Common myeloid progenitor, CD34-positive (primary cell): ENCODE measurements at regions of chr6 and their contacts with region 1.

Region 1: GRCh38 chr6:44172731-44173500 is 14.3 kb downstream of the CAPN11 start:
- DNase-seq: peak; percentile 74 to 86 (median 83)
- H3K4me3 ChIP-seq: no peak overlapping the region
- H3K27ac ChIP-seq: no peak overlapping the region
- H3K4me1 ChIP-seq: peaks cover 0 to 25% (median 23%) of the 10 kb centered on the region in 4 experiments
- H3K27me3 ChIP-seq: no peaks in the 10 kb centered on the region

Region 2: DNA sequence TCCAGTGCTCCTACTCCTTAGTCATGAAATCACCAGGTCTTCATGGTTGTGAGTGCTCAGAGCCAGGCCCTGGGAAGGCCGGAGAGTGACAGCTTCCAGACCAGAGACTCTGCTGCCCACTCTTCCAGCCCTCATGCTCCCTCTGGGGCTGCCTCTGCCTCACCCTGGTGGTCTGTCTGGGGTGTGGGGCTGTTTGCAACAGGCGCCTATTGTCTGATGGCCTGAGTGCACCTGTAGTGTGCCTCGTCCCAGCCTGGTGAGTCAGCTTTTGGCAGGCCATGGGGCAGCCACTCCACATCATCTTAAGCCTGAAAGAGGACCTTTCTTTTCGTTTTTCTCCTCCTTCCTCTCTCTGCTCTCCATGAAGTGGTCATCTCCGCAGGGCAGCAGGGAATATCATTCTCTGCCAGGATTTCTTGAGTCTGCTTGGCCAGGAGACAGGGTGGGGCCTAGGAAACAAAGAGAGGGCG is 229.1 kb before region 1 on chr6:
- CTCF ChIA-PET with region 1: no interaction called
- POLR2A ChIA-PET with region 1: no interaction called
- DNase-seq: no peak
- H3K4me3 ChIP-seq: no peak overlapping the region
- H3K27ac ChIP-seq: no peak overlapping the region
- H3K4me1 ChIP-seq: peaks cover 0 to 13% (median 11%) of the 10 kb centered on the region in 4 experiments
- H3K27me3 ChIP-seq: no peaks in the 10 kb centered on the region

Region 3: GRCh38 chr6:44190715-44191114 is 17.8 kb after region 1 on chr6:
- CTCF ChIA-PET with region 1: interaction called, 11 read pairs
- POLR2A ChIA-PET with region 1: interaction called, 3 read pairs
- DNase-seq: peak in 1 of 3 donors; percentile 36
- H3K4me3 ChIP-seq: no peak overlapping the region
- H3K27ac ChIP-seq: no peak overlapping the region
- H3K4me1 ChIP-seq: peaks cover 0 to 14% (median 11%) of the 10 kb centered on the region in 4 experiments
- H3K27me3 ChIP-seq: no peaks in the 10 kb centered on the region

Region 4: DNA sequence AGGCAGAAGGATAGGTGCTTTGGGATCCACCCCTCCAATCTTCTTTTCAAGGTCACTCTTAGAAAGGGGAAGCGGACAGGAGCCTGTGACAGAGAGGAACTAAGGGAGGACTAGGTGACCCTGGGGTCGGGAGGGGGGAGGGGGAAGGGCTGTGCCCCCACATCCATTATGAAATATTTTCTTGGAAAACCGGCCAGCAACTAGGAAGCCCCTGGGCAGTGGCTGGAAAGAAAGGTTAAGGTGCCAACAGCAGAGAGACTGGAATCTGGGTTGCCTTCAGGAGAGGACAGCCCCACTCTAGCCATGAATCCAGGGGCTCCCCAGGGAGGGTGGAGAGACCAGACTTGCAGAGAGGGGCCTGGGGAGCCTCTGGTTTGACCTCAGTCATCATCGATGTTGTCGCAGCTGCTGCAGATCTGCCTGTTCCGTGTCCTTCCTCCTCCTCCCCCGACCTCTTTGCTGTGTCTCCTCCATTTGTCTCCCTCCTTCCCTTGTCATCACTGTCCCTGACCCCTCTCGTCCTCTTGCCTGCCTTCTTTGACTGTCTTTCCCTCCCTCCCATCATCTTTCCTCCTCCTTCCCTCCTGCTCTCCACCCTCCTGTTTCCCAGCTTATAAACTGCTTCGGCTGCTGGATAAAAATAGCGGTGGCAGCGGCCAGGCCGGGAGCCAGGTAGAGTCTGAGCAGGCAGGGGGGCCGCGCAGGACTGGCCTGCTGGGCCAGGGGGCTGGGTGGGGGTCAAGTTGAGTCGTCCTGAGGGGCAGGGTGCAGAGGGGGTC is 53.6 kb after region 1 on chr6:
- CTCF ChIA-PET with region 1: interaction called, 11 read pairs
- POLR2A ChIA-PET with region 1: interaction called, 4 read pairs
- DNase-seq: no peak
- H3K4me3 ChIP-seq: peak overlapping the region in 1 of 7 experiments; percentile 5
- H3K27ac ChIP-seq: peak overlapping the region in 1 of 2 experiments; percentile 55
- H3K4me1 ChIP-seq: peaks cover 0 to 56% (median 41%) of the 10 kb centered on the region in 4 experiments
- H3K27me3 ChIP-seq: no peaks in the 10 kb centered on the region

Region 5: GRCh38 chr6:44246663-44247337 is 73.9 kb after region 1 on chr6 and contains the start of gene HSP90AB1:
- CTCF ChIA-PET with region 1: interaction called, 30 read pairs
- POLR2A ChIA-PET with region 1: interaction called, 6 read pairs
- DNase-seq: peak; percentile 98 to 99 (median 99)
- H3K4me3 ChIP-seq: peak within 1 kb of the TSS; percentile 67 to 100 (median 97)
- H3K27ac ChIP-seq: peak within 1 kb of the TSS; percentile 88 to 96
- H3K4me1 ChIP-seq: peaks cover 13 to 39% (median 31%) of the 10 kb centered on the region in 4 experiments
- H3K27me3 ChIP-seq: no peaks in the 10 kb centered on the region